Activated T-helper 1 cell treated with anti-CD3 and anti-CD28 coated beads, Interleukin-12 subunit alpha, Interleukin-12 subunit beta, Interleukin-2, Interleukin-4 antibody, amounts not matched to agents 30 ng/mL and 10 ng/mL and 1 ng/mL, durations not matched to agents 14 hours and 24 hours and 36 hours (primary cell): ENCODE measurements at regions of chr16 and their contacts with region 1.

Region 1: DNA sequence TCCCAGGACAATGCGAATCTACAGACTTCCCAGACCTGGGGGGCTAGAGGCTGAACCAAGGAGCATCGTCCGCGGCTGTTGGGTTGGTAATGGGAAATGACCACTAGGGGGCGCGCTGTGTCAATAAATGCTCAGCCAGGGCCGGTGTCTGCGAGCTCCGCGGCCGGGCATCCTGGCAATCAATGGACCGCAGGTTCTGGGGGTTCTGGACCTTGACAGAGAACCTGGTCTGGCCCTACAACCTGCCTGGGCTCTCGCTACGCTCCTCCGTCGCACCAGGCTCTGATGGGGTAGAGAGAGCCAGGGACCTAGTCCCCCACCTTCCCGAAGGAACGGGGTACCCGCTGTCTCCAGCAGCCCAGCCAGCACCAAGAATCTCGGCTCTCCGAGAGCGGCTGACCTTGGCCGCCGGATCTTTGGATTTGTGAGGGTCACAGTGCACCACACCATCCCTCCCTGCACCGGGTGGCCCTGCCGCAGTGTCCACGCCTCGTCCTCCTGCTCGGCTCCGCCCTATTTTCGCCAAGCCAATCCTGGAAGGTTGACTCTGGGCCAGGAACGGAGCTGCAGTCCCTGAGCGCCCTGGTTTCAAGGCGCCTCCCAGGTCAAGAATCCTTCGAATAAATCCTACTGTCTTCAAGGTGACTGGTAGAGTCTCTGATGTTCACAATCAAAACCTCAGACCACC is 20.4 kb upstream of the BEAN1 start:
- DNase-seq: peak; percentile 77
- H3K4me3 Mint-ChIP-seq: peak overlapping the region; percentile 84
- H3K27ac Mint-ChIP-seq: peak overlapping the region; percentile 25
- H3K4me1 Mint-ChIP-seq: peaks cover 26% of the 10 kb centered on the region
- H3K27me3 Mint-ChIP-seq: peaks cover 23% of the 10 kb centered on the region

Region 2: GRCh38 chr16:66427036-66427860 is 20.6 kb after region 1 on chr16 and contains the start of gene BEAN1:
- intact Hi-C with region 1: loop called (anchors 2 kb)
- DNase-seq: no peak
- H3K4me3 Mint-ChIP-seq: no peak within 1 kb of the TSS
- H3K27ac Mint-ChIP-seq: no peak within 1 kb of the TSS
- H3K4me1 Mint-ChIP-seq: no peaks in the 10 kb centered on the region
- H3K27me3 Mint-ChIP-seq: peaks cover 68% of the 10 kb centered on the region
- total RNA-seq, gene BEAN1: not detected in 2 replicates

Region 3: DNA sequence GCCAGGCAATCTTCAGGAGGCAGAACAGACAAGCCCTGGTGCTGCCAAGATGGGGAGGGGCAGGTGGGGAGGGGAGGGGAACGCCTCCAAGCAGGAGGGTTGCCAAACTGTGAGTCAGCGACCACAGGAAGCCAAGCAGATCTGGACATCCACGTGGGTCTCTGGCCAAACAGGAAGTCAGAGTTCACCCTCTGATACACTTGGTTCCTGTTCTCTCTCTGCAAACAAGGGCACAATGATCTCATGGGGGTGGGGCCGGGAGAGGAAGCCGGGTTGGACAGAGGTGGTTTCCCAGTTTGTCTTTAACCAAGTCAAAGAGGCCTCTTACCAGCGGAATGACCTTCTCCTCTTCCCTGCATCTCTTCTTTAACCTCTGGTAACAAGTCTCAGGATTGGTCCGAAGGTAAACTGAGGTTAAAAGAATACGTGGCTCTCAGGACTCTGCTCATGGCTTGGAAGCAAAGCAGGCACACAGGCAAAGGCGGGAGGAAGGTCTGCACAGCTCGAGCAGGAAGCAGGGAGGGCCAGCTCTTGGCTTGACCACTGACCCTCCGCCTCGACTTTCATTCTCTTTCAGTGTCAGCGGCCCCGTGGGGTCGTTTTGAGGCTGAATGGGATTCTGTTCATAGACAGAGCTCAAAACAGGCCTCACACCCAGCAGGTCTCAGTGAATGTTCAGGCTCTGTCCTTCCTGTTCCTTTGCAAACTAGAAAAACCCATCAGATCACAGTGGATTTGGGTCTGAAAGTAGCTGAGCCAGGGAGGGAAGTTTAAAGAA is 110.3 kb after region 1 on chr16:
- intact Hi-C with region 1: loop called (anchors 1 kb)
- DNase-seq: peak; percentile 84
- H3K4me3 Mint-ChIP-seq: peak overlapping the region; percentile 88
- H3K27ac Mint-ChIP-seq: peak overlapping the region; percentile 99
- H3K4me1 Mint-ChIP-seq: peaks cover 78% of the 10 kb centered on the region
- H3K27me3 Mint-ChIP-seq: no peaks in the 10 kb centered on the region

Region 4: GRCh38 chr16:66588981-66589713 is 182.5 kb after region 1 on chr16:
- intact Hi-C with region 1: loop called (anchors 1 kb)
- DNase-seq: peak; percentile 54
- H3K4me3 Mint-ChIP-seq: peak overlapping the region; percentile 73
- H3K27ac Mint-ChIP-seq: peak overlapping the region; percentile 49
- H3K4me1 Mint-ChIP-seq: peaks cover 42% of the 10 kb centered on the region
- H3K27me3 Mint-ChIP-seq: peaks cover 3% of the 10 kb centered on the region

Region 5: DNA sequence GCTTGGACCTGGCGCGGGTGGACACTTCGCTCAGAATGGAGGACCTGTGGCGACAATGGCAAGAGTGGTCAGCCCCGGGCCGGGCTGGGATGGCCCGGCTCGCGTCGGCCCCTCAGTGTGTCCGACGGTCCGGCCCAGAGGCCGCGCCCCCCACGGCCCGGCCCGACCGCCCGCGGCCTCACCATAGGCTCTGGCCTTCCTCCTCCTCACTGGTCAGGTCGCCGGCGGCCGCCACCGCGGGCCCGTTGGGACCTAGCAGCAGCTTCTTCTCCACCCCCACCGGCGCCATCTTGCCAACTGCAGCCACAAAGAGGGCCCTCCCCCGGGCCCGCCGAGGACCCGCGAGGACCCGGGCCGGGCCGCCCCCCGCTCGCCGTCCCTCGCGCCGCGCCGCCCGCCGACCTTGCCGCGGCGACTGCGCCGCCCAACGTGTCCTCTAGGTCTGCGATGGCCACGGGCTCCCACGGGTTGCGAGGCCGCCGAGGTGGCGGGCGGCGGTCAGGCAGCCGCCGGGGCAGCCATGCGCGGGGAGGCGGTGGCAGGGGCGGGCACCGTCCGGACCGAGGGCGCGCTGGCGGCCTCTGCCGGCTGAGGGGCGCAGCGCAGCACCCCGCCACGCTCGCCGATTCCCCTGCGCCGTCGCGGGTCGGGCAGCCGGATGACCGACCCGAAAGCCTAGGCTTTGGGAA is 344.8 kb after region 1 on chr16 and contains the start of gene DYNC1LI2:
- intact Hi-C with region 1: loop called (anchors 5 kb)
- DNase-seq: peak; percentile 76
- H3K4me3 Mint-ChIP-seq: peak within 1 kb of the TSS; percentile 93
- H3K27ac Mint-ChIP-seq: peak within 1 kb of the TSS; percentile 80
- H3K4me1 Mint-ChIP-seq: peaks cover 46% of the 10 kb centered on the region
- H3K27me3 Mint-ChIP-seq: peaks cover 16% of the 10 kb centered on the region
- total RNA-seq, gene DYNC1LI2: 55.7 and 60.3 TPM in 2 replicates